ENCODE measurements at regions of chr10 and their contacts with region 1.

Region 1: DNA sequence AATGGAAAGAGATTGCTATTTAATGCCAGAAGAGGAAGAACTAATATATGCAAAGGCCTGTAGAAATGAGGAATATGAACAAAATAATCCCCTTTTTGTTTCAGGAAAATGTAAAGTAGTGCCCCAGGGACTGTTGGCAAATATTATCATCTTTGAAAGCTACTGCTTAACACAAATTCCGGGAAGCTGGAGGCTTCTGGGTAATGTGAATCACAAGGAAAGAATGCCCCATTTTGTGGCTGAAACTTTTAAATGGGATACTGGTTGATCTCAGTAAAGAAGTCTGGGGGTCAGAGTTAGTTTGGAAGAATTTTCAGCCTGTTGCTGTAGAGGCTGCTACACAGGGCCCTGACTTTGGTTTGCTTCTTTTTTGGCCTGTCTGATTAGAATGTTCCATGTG is 141.0 kb downstream of the PTEN start:
- DNase-seq: no peak
- ATAC-seq: no peak
- H3K4me3 ChIP-seq: no peak overlapping the region
- H3K27ac ChIP-seq: no peak overlapping the region
- H3K4me1 ChIP-seq: no peaks in the 10 kb centered on the region
- H3K27me3 ChIP-seq: no peaks in the 10 kb centered on the region
- CTCF ChIP-seq: no peak
- EP300 ChIP-seq: no peak
- POLR2A ChIP-seq: no peak
- RAD21 ChIP-seq: no peak

Region 2: GRCh38 chr10:88045656-88046415 is 41.4 kb after region 1 on chr10:
- CTCF ChIA-PET with region 1: no interaction called
- POLR2A ChIA-PET with region 1: no interaction called
- RAD21 ChIA-PET with region 1: no interaction called
- SMC1A ChIA-PET with region 1: no interaction called
- in situ Hi-C with region 1: no loop called
- intact Hi-C with region 1: loop called (anchors 5 kb)
- DNase-seq: no peak
- ATAC-seq: no peak
- H3K4me3 ChIP-seq: no peak overlapping the region
- H3K27ac ChIP-seq: no peak overlapping the region
- H3K4me1 ChIP-seq: no peaks in the 10 kb centered on the region
- H3K27me3 ChIP-seq: no peaks in the 10 kb centered on the region
- CTCF ChIP-seq: no peak
- EP300 ChIP-seq: no peak
- POLR2A ChIP-seq: no peak
- RAD21 ChIP-seq: no peak